ENCODE measurements at regions of chr7 and their contacts with region 1.

Region 1: DNA sequence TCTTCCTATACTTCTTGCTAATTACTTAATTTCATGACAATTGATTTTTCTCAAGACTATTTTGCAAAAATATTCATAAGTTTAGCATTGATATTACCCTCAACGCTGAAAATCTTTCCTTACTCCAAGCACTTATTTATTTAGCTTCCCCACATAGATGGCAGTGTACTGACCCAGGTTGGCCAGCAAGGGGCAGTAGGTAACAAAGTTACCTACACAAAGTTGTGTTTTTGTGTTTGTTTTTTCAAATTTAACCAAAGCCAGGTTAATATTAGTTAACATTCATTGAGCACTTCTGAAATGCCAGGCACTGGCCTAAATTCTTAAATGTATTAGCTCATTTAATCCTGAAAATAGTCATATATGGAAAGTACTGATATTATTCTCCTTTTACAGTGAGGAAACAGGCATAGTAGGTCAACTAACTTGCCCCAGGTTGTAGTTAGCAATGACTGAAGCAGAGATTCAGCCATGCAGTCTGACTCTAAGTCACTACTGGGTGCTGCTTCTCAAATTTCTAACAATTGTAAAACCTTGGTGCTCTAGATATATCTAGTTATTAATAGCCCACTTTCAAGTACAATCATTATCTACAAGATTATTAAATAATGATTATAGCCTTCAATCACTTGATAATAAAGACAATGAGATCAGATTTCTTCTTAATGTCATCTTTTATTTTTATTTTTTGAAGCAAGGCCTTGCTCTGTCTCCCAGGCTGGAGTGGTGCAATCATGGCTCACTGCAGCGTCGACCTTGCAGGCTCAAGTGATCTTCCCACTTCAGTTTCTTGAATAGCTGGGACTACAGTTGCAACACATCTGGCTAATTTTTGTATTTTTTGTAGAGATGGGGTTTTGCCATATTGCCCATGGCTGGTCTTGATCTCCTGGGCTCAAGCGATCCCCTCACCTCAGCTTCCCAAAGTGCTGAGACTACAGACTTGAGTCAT is 5.8 kb upstream of the GGCT start:
- DNase-seq: peak in 1 of 2 experiments; percentile 63
- ATAC-seq: peak; percentile 78 to 80; a peak in 4 of 6 replicates
- H3K4me3 ChIP-seq: no peak overlapping the region
- H3K27ac ChIP-seq: no peak overlapping the region
- H3K4me1 ChIP-seq: 0 out of 3 replicates have a peak, but pooled peaks cover 3% of the 10 kb centered on the region
- CTCF ChIP-seq: peak; percentile 69
- EP300 ChIP-seq: no peak
- POLR2A ChIP-seq: no peak
- RAD21 ChIP-seq: peak; percentile 54 to 58; a peak in 4 of 5 replicates

Region 2: DNA sequence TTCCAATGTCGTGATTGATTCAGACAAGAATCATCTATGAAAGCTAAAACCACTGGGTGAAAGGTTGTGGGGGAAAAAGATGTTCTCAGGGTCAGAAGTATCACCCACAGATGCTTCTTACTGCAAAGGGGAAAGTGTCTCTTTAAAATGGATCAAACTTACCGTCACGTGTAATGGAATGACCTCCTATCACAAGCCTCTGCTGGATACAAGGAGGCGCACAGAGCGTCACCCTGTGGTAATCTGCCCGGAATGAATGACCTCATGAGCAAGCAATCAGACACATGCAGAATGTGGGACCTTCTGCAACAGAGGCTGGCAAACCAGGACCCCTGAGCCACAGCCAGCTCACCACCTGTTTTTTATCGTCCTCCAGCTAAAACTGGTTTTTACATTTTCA is 671.1 kb before region 1 on chr7:
- CTCF ChIA-PET with region 1: no interaction called
- POLR2A ChIA-PET with region 1: no interaction called
- DNase-seq: peak; percentile 16 to 60
- ATAC-seq: peak; percentile 87 to 94; a peak in 5 of 6 replicates
- H3K4me3 ChIP-seq: no peak overlapping the region
- H3K27ac ChIP-seq: no peak overlapping the region
- H3K4me1 ChIP-seq: no peaks in the 10 kb centered on the region
- CTCF ChIP-seq: no peak
- EP300 ChIP-seq: no peak
- POLR2A ChIP-seq: no peak
- RAD21 ChIP-seq: peak in 1 of 2 experiments; percentile 11; a peak in 1 of 5 replicates

Region 3: GRCh38 chr7:30521532-30521931 is 11.1 kb after region 1 on chr7:
- CTCF ChIA-PET with region 1: interaction called, 12 read pairs
- POLR2A ChIA-PET with region 1: no interaction called
- DNase-seq: no peak
- ATAC-seq: peak in 1 of 2 experiments; percentile 50; a peak in 2 of 6 replicates
- H3K4me3 ChIP-seq: no peak overlapping the region
- H3K27ac ChIP-seq: no peak overlapping the region; a peak in 1 of 6 replicates
- H3K4me1 ChIP-seq: peaks cover 18% of the 10 kb centered on the region; the same call in 2 of the 3 replicates
- CTCF ChIP-seq: no peak
- EP300 ChIP-seq: no peak
- POLR2A ChIP-seq: no peak
- RAD21 ChIP-seq: no peak

Region 4: DNA sequence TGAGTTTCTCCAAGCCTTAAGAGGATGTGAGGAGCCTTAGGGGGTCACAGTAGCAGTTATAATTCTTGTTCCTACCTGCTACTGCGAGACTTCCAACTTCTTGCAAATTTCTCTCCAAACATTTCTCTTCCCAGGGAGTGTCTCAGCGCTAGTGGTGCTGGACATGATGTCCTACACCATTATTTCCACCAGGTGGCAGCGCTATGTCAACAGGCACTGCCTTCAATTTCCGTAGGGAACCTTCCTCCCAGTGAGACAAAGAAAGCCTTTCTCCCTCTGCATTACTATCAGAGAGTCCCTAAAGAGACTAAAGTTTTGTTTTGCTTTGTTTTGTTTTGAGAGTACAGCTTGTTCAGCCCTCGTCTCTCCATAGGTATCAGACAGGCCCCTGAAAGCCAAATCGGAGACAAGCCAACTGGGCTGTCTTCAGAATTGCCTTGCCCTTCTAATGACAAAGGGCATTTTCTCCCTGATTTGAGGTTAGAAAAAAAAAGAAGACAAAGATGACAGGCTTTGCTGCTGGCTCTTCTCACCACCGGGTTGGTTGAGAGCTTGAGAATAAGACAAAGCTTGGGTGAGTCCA is 38.5 kb after region 1 on chr7:
- CTCF ChIA-PET with region 1: interaction called, 10 read pairs
- POLR2A ChIA-PET with region 1: no interaction called
- DNase-seq: peak; percentile 69 to 79
- ATAC-seq: peak; percentile 94 to 97
- H3K4me3 ChIP-seq: no peak overlapping the region
- H3K27ac ChIP-seq: no peak overlapping the region
- H3K4me1 ChIP-seq: peaks cover 9% of the 10 kb centered on the region; the same call in 2 of the 3 replicates
- CTCF ChIP-seq: peak; percentile 73
- EP300 ChIP-seq: no peak
- POLR2A ChIP-seq: no peak
- RAD21 ChIP-seq: peak; percentile 47 to 57

Region 5: DNA sequence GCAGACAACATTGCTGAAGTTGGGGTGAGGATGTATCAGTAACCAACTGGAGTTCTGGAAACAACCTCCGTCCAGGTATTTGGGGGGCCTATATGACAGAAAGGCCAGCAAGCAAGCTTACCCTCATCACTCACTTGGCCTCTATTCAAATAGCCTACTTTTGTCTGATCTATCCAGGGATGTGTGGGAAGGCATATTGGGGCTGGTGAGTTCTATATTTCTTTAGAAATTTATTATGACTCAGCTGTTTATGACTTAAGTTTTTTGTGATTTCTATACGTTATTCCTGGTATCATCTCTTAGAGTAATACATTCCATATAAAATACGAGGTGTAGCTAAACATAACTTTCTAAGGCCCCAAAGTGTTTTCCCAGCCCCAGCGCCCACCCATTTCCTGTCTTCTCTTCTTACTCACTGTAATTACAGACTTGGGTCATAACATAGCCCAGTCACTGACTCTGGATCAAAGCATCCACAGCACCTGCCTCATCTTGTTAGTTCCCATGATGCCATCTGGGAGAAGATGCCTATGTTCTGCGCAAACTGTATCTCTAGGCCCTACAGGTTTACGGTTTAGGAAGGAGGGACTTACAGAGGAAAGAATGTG is 102.4 kb after region 1 on chr7:
- CTCF ChIA-PET with region 1: no interaction called
- POLR2A ChIA-PET with region 1: no interaction called
- DNase-seq: no peak
- ATAC-seq: no peak
- H3K4me3 ChIP-seq: no peak overlapping the region
- H3K27ac ChIP-seq: no peak overlapping the region
- H3K4me1 ChIP-seq: no peaks in the 10 kb centered on the region
- CTCF ChIP-seq: no peak
- EP300 ChIP-seq: no peak
- POLR2A ChIP-seq: no peak
- RAD21 ChIP-seq: no peak